ENCODE measurements at regions of chr4 and their contacts with region 1.

Region 1: DNA sequence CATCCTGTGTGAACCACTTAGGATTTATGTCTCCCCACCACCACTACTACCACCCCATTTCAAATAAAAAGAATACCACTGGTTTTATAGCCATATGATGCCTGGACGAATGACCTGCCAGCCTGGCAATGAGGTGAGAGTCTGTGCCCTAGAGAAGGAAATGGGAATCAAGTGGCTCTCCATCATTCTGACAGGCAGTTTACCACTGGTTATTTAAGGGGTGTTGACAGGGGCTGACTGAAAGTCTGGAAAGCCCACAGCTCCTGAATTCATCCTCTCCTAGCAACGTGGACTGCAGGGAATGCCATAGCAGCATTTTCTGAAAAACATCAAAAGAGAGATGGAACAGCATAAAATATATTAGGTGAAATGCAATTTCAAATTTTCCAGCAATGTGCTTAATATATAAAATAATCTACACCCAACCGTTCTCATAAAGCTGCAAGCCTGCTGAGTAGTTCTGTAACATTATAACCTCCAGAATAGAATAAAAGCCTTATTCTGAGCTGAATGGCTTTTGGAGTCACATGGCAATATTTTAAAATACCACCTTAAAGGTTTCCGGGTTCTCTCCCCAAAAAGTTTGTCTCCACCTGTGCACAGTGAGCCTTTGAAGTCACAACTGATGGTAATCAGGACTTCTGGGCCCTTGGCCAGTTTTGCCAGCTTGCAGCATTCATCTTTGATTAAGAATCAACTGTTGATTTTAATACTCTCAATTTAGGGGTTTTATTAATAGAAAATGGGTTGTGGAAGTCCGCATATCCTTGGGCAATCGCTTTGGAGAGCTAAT is 121.5 kb downstream of the DCTD start:
- DNase-seq: no peak
- ATAC-seq: no peak
- H3K4me3 ChIP-seq: no peak overlapping the region
- H3K4me3 Mint-ChIP-seq: no peak overlapping the region
- H3K27ac ChIP-seq: no peak overlapping the region
- H3K27ac Mint-ChIP-seq: no peak overlapping the region
- H3K4me1 ChIP-seq: no peaks in the 10 kb centered on the region
- H3K4me1 Mint-ChIP-seq: peaks cover 0 to 2% (median 0%) of the 10 kb centered on the region in 7 donors
- H3K27me3 ChIP-seq: no peaks in the 10 kb centered on the region
- H3K27me3 Mint-ChIP-seq: peaks cover 8 to 17% (median 10%) of the 10 kb centered on the region in 5 donors

Region 2: GRCh38 chr4:182738283-182739047 is 57.2 kb before region 1 on chr4:
- CTCF ChIA-PET with region 1: no interaction called
- POLR2A ChIA-PET with region 1: no interaction called
- intact Hi-C with region 1: loop called in 1 of 2 experiments (anchors 10 kb)
- DNase-seq: no peak
- ATAC-seq: no peak
- H3K4me3 ChIP-seq: no peak overlapping the region
- H3K4me3 Mint-ChIP-seq: no peak overlapping the region
- H3K27ac ChIP-seq: no peak overlapping the region
- H3K27ac Mint-ChIP-seq: no peak overlapping the region
- H3K4me1 ChIP-seq: no peaks in the 10 kb centered on the region
- H3K4me1 Mint-ChIP-seq: no peaks in the 10 kb centered on the region
- H3K27me3 ChIP-seq: no peaks in the 10 kb centered on the region
- H3K27me3 Mint-ChIP-seq: peaks cover 0 to 21% (median 8%) of the 10 kb centered on the region in 5 donors

Measured in naive thymus-derived CD4-positive, alpha-beta T cell (primary cell).